ENCODE measurements at regions of chr11 and their contacts with region 1.

Region 1: GRCh38 chr11:122796128-122796717 is 42.1 kb upstream of the CRTAM start:
- DNase-seq: no peak
- H3K4me3 ChIP-seq: no peak overlapping the region
- H3K27me3 ChIP-seq: no peaks in the 10 kb centered on the region
- CTCF ChIP-seq: peak; percentile 86

Region 2: DNA sequence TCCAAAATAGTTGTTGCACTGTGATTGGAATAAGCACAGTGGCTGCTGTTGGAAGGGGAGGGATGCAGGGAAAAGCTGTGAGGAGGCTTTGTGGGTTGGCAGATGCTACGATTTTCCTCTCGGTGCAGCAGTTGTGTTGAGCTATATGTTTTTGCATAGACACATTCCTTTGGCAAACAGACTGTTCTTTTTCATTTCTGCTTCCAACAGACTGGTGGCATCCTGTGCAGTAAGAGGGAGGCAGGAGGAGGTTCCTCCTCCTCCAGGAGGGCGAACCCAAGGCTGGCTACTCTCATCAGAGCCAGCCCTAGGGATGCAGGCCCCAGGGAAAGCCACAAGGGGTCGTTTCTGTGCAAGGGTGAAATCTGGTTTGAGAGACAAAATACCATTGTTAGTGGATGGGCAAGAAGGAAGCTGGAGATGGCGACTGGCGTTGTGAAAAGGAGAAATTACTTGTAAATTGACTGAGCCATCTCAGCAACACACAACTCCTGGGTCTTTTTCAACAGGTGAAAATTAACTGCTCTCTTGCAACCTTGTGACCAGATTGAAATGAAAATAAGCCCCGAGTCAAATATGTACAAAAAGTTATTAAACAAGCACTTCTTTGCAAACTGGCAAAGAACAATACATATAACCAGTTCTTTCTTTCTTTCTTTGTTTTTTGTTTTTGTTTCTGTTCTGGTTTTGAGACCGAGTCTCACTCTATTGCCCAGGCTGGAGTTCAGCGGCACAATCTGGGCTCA is 167.2 kb before region 1 on chr11:
- CTCF ChIA-PET with region 1: interaction called, 14 read pairs
- POLR2A ChIA-PET with region 1: no interaction called
- DNase-seq: no peak
- H3K4me3 ChIP-seq: no peak overlapping the region
- H3K27me3 ChIP-seq: peaks cover 5% of the 10 kb centered on the region
- CTCF ChIP-seq: peak; percentile 93

Region 3: GRCh38 chr11:122808478-122808869 is 12.3 kb after region 1 on chr11:
- CTCF ChIA-PET with region 1: interaction called, 10 read pairs
- POLR2A ChIA-PET with region 1: no interaction called
- DNase-seq: no peak
- H3K4me3 ChIP-seq: no peak overlapping the region
- H3K27me3 ChIP-seq: no peaks in the 10 kb centered on the region
- CTCF ChIP-seq: 0 out of 2 replicates have a peak, but pooled peaks have one; percentile 10

Region 4: GRCh38 chr11:122832721-122833470 is 36.7 kb after region 1 on chr11:
- CTCF ChIA-PET with region 1: interaction called, 8 read pairs
- POLR2A ChIA-PET with region 1: interaction called, 12 read pairs
- DNase-seq: no peak
- H3K4me3 ChIP-seq: no peak overlapping the region
- H3K27me3 ChIP-seq: no peaks in the 10 kb centered on the region
- CTCF ChIP-seq: no peak

Region 5: DNA sequence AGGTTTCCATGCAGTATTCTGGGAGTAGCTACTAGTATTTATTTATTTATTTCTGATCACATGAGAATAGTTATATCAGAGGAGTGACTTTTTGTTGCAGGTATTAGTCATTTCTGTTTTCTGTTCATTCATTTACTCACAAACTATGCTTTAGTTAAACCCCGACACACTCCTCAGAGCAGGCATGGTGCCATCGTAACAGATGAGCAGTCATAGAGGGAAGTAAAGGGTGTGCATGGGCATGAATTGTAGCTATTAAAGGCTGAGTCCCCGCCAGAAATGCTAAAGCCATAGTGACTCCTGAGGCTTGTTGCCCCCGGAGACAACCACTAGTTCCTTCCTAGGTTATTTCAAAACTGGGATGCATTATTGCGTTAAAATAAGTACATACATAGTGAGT is 96.9 kb after region 1 on chr11:
- CTCF ChIA-PET with region 1: no interaction called
- POLR2A ChIA-PET with region 1: no interaction called
- DNase-seq: no peak
- H3K4me3 ChIP-seq: no peak overlapping the region
- H3K27me3 ChIP-seq: no peaks in the 10 kb centered on the region
- CTCF ChIP-seq: no peak